ENCODE measurements at regions of chr7 and their contacts with region 1.

Region 1: DNA sequence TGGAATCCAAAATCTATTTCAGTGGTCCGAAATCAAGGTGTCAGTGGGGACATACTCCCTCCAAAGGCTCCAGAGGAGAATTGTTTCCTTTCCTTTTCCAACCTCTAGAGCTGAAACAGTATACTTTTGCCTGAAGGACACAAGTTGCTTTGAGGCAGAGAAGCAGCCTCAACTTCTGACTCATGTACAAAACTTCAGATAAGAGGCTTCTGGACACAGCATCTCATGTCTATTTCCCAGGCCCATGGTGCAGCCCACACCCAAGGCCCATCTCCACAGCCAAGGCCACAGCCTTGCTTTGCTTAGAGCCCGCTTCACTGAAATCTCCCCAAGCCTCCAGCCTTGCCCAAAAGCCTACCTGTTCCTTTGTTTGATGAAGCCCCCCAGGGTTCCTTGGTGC is 68.9 kb downstream of the ZNF467 start:
- DNase-seq: peak in 1 of 2 experiments; percentile 31
- H3K4me3 ChIP-seq: no peak overlapping the region
- H3K27ac ChIP-seq: no peak overlapping the region
- H3K4me1 ChIP-seq: peaks cover 0 to 6% (median 2%) of the 10 kb centered on the region in 4 experiments; a peak in 2 of 7 replicates
- H3K27me3 ChIP-seq: no peaks in the 10 kb centered on the region
- CTCF ChIP-seq: no peak
- EP300 ChIP-seq: no peak
- POLR2A ChIP-seq: no peak
- RAD21 ChIP-seq: no peak

Region 2: GRCh38 chr7:149670288-149670687 is 34.2 kb before region 1 on chr7:
- CTCF ChIA-PET with region 1: interaction called, 21 read pairs
- POLR2A ChIA-PET with region 1: no interaction called
- DNase-seq: no peak
- H3K4me3 ChIP-seq: no peak overlapping the region
- H3K27ac ChIP-seq: no peak overlapping the region
- H3K4me1 ChIP-seq: no peaks in the 10 kb centered on the region
- H3K27me3 ChIP-seq: no peaks in the 10 kb centered on the region
- CTCF ChIP-seq: no peak
- EP300 ChIP-seq: no peak
- POLR2A ChIP-seq: no peak
- RAD21 ChIP-seq: no peak

Region 3: GRCh38 chr7:149690688-149691446 is 13.6 kb before region 1 on chr7:
- CTCF ChIA-PET with region 1: interaction called, 32 read pairs
- POLR2A ChIA-PET with region 1: interaction called, 3 read pairs
- DNase-seq: peak; percentile 61 to 97
- H3K4me3 ChIP-seq: peak overlapping the region; percentile 27 to 62 (median 42); a peak in 6 of 8 replicates
- H3K27ac ChIP-seq: no peak overlapping the region
- H3K4me1 ChIP-seq: peaks cover 0 to 2% (median 0%) of the 10 kb centered on the region in 4 experiments; a peak in 3 of 7 replicates
- H3K27me3 ChIP-seq: no peaks in the 10 kb centered on the region
- CTCF ChIP-seq: no peak
- EP300 ChIP-seq: no peak
- POLR2A ChIP-seq: no peak
- RAD21 ChIP-seq: no peak

Region 4: DNA sequence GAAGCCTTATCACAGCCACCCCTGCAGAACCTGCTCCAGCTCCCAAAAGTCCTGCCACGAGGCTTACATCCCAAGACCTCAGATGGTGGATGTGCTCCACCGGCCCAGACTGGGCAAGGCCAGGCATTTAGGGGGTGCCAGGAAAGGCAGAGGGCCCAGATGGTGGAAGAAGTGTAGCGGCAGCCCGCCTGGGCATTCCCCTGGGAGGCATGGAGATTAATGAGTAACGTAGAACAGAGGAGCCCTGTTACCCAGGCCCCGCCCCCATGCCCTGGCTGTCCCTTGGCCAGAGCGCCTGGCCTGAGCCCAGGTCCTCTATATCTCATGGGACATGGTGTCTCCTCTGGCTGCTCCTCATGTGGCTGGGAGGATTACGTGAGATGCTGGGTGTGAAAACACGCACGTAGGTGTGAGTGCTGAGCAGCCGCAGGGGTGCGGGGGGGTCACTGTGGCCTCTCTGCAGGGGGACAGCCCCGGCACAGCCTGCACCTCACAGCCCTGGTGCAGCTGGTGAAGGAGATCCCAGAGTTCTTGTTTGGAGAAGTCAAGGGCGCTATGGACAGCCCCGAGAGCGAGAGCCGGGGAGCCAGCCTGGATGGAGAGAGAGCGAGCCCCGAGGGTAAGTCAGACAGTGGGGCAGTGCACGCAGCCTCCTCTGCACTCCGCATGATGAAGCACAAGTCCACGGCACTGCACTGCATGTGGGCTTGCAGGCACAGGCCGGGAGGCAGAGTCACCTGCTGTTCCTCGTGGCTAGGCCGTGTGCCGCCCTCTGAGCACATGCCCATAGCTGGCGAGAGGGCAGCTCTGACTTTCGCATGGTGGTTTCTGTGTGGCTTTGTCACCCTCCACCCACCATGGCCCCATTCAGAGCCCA is 16.1 kb after region 1 on chr7:
- CTCF ChIA-PET with region 1: interaction called, 11 read pairs
- POLR2A ChIA-PET with region 1: interaction called, 3 read pairs
- DNase-seq: no peak
- H3K4me3 ChIP-seq: no peak overlapping the region
- H3K27ac ChIP-seq: no peak overlapping the region
- H3K4me1 ChIP-seq: peaks cover under 1 to 6% (median 4%) of the 10 kb centered on the region in 4 experiments
- H3K27me3 ChIP-seq: no peaks in the 10 kb centered on the region
- CTCF ChIP-seq: no peak
- EP300 ChIP-seq: no peak
- POLR2A ChIP-seq: no peak
- RAD21 ChIP-seq: no peak

Measured in H1 (cell line).